Activated naive CD8-positive, alpha-beta T cell treated with anti-CD3 and anti-CD28 coated beads, Interleukin-2, amount 10 ng/mL, durations not matched to agents 7 days and 5 days (primary cell): ENCODE measurements at regions of chr14 and their contacts with region 1.

Region 1: DNA sequence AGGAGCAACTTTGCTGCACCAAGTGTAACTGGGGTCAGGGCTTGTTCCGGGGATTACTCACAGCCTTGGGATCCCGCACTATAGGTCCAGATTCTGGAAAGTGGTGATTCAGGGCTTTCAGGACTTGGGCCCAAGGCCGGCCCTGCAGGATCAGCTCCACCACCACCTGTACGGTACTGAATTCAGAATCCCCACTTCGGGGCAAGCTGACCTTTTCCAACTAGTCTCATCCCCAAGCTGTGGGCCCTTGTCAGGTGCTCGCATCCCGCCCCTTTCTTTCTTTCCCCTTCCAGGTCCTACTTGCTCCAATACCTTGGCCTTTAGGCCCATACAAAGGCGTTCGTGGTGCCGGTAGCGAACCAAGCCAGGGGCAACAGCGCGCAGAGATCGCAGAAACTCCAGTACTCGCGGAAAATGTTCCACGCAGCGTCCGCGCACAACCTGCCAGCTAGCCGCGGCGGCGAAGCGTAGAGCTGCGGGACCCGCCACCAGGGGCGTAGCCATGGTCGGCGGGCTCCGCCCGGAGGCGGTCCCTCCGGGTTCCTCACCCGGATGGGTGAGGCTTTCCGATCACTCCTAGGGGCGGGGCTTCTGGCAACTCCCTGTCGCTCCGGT is 487 bp downstream of the TINF2 start:
- DNase-seq: peak; percentile 95
- ATAC-seq: peak; percentile 82
- H3K4me3 Mint-ChIP-seq: peak overlapping the region; percentile 85
- H3K27ac Mint-ChIP-seq: peak overlapping the region; percentile 99
- H3K4me1 Mint-ChIP-seq: peaks cover 42% of the 10 kb centered on the region
- H3K27me3 Mint-ChIP-seq: no peaks in the 10 kb centered on the region

Region 2: GRCh38 chr14:24146978-24147760 is 94.8 kb before region 1 on chr14 and contains the start of gene RNF31:
- POLR2A ChIA-PET with region 1: interaction called, 11 read pairs
- DNase-seq: peak; percentile 95
- ATAC-seq: peak; percentile 82
- H3K4me3 Mint-ChIP-seq: peak within 1 kb of the TSS; percentile 94
- H3K27ac Mint-ChIP-seq: peak within 1 kb of the TSS; percentile 96
- H3K4me1 Mint-ChIP-seq: peaks cover 54% of the 10 kb centered on the region
- H3K27me3 Mint-ChIP-seq: no peaks in the 10 kb centered on the region
- total RNA-seq, gene RNF31: 131 to 153 TPM

Region 3: GRCh38 chr14:24215495-24216344 is 26.2 kb before region 1 on chr14 and contains the start of gene MDP1:
- POLR2A ChIA-PET with region 1: interaction called, 32 read pairs
- DNase-seq: peak; percentile 85
- ATAC-seq: peak; percentile 73
- H3K4me3 Mint-ChIP-seq: peak within 1 kb of the TSS; percentile 93
- H3K27ac Mint-ChIP-seq: peak within 1 kb of the TSS; percentile 98
- H3K4me1 Mint-ChIP-seq: peaks cover 38% of the 10 kb centered on the region
- H3K27me3 Mint-ChIP-seq: no peaks in the 10 kb centered on the region
- total RNA-seq, gene MDP1: 11.9 to 15.4 TPM

Region 4: GRCh38 chr14:24289649-24290249 is 47.8 kb after region 1 on chr14:
- POLR2A ChIA-PET with region 1: interaction called, 58 read pairs
- DNase-seq: peak; percentile 67
- ATAC-seq: peak; percentile 97
- H3K4me3 Mint-ChIP-seq: peak overlapping the region; percentile 41
- H3K27ac Mint-ChIP-seq: no peak overlapping the region
- H3K4me1 Mint-ChIP-seq: peaks cover 32% of the 10 kb centered on the region
- H3K27me3 Mint-ChIP-seq: peaks cover 18% of the 10 kb centered on the region

Region 5: GRCh38 chr14:24310646-24311604 is 69.0 kb after region 1 on chr14 and contains the start of gene LTB4R:
- POLR2A ChIA-PET with region 1: interaction called, 32 read pairs
- DNase-seq: peak; percentile 83
- ATAC-seq: peak; percentile 88
- H3K4me3 Mint-ChIP-seq: peak within 1 kb of the TSS; percentile 84
- H3K27ac Mint-ChIP-seq: peak within 1 kb of the TSS; percentile 84
- H3K4me1 Mint-ChIP-seq: peaks cover 66% of the 10 kb centered on the region
- H3K27me3 Mint-ChIP-seq: no peaks in the 10 kb centered on the region
- total RNA-seq, gene LTB4R: 27.0 to 27.8 TPM